ENCODE measurements at regions of chr22 and their contacts with region 1.

Region 1: DNA sequence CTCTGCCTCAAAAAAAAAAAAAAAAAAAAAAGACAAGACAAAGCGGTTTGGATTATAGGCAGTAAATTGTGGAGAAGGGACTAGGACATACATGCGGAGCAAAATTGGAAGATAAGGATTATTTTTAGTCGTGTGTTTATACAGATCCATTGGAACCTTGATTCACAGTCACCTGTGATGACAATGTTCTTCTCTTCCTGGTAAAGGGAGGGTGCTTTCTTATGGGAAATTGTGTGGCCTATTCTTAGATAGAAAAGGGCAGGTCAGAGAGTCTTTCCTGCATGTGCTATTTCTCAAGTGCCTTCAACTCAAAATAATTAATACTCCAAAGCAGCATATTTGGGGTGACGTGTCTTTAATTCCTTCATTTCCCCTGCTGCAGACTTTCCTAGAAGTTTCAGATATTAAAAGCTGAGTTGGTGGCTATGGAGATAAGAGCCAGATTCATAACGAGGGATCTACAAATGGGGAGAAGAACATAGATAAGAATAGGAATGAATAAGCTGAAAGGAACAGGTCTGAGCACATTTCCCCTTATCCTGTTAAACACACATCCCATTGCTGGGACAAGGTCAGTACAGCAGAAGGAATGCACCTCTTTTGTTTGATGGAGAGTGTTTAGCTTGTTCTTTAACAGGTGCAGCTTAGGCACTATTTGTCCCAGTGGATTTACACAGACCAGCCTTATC is 22.5 kb downstream of the GSTT2B start:
- DNase-seq: no peak
- H3K4me3 ChIP-seq: no peak overlapping the region
- H3K27ac ChIP-seq: no peak overlapping the region
- H3K4me1 ChIP-seq: no peaks in the 10 kb centered on the region
- H3K27me3 ChIP-seq: no peaks in the 10 kb centered on the region
- CTCF ChIP-seq: no peak
- POLR2A ChIP-seq: no peak

Region 2: GRCh38 chr22:24005201-24005600 is 66.7 kb after region 1 on chr22 and contains the start of gene GSTT4:
- intact Hi-C with region 1: loop called (anchors 5 kb)
- DNase-seq: no peak
- H3K4me3 ChIP-seq: no peak within 1 kb of the TSS
- H3K27ac ChIP-seq: no peak within 1 kb of the TSS
- H3K4me1 ChIP-seq: no peaks in the 10 kb centered on the region
- H3K27me3 ChIP-seq: no peaks in the 10 kb centered on the region
- CTCF ChIP-seq: no peak
- POLR2A ChIP-seq: no peak
- total RNA-seq, gene GSTT4: not detected